ENCODE measurements at regions of chr17 and their contacts with region 1.

Region 1: DNA sequence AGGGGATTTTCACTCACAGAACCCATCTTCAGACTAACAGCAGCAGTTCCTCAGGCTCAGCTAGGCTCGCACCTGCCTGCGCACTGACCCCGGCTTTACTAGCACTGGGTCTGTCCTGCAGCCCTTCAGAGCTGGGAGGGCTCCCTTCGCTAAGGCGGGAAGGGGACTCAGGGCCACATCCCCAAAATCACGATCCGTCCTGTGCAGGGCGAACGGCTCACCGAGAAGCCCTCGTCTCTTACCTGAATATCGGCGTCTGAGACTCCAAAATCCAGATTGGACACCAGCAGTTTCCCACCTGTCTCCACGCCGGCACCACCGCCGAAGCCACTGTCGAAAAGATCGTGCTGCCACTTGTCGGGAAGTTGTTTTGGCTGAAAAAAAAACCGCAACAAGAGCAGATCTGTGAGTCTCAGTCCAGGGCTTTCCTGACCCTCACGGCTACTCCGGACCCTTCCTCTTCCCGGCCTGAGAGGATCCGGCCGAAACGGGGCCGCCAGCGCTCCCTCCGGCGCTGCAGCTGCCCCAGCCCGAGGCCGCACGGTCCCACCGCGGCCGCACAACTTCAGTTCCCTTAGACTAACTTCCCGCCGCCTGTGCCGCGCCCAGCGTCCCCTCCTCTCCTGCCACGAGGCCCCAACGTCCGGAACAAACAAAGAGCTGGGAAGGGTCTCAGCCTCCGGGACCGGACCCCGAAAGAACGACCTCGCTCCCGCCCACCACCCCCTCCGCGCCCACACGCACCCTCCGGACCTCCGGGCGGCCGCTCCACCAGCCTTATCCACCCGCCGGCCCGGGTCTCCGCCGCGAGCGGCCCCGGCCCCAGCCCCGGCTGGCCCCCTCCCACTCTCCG is 713 bp downstream of the ALYREF start:
- DNase-seq: no peak
- ATAC-seq: no peak
- H3K4me3 ChIP-seq: peak overlapping the region; percentile 91
- H3K27ac ChIP-seq: peak overlapping the region; percentile 74
- H3K4me1 ChIP-seq: peaks cover 30% of the 10 kb centered on the region
- H3K27me3 ChIP-seq: no peaks in the 10 kb centered on the region
- CTCF ChIP-seq: no peak
- EP300 ChIP-seq: no peak
- POLR2A ChIP-seq: no peak
- RAD21 ChIP-seq: no peak

Region 2: DNA sequence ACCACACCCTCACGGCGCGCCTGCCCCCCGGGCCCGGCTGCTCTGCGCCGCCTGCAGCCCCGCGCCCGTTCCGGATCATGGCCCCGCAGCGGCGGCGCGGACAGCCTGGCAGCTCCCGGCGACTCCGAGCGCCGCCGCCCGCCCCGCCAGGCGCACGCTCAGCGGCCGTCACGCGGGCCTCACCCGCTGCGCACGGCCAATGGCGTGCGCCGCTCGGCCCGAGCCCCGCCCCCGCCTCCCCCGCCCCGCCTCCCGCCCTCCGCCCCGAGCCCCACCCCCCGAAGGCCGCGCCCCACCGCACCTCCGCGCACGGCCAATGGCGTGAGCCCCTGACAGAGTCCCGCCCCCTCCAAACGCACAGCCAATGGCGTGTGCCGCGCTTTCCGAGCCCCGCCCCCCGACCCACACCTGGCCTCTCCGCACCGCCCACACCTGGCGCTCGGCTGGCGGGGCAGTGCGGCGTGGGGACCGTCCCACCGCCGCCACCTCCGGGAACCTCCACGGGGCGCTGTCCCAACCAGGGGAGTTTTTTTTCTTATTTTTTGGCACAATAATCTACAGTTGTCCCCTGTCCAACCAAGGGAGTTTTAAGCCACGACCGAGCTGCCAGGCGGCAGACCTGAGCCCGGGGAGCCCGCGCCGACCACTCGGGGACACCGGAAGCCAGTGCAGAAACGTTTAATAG is 20.7 kb after region 1 on chr17 and contains the start of gene PCYT2:
- CTCF ChIA-PET with region 1: interaction called, 3 read pairs
- POLR2A ChIA-PET with region 1: interaction called, 13 read pairs
- RAD21 ChIA-PET with region 1: interaction called, 3 read pairs
- SMC1A ChIA-PET with region 1: no interaction called
- in situ Hi-C with region 1: no loop called
- intact Hi-C with region 1: no loop called
- DNase-seq: peak; percentile 45
- ATAC-seq: peak; percentile 98
- H3K4me3 ChIP-seq: peak within 1 kb of the TSS; percentile 95
- H3K27ac ChIP-seq: peak within 1 kb of the TSS; percentile 4; the same call in 1 of the 2 replicates
- H3K4me1 ChIP-seq: peaks cover 5% of the 10 kb centered on the region; the same call in 1 of the 2 replicates
- H3K27me3 ChIP-seq: no peaks in the 10 kb centered on the region
- CTCF ChIP-seq: no peak
- EP300 ChIP-seq: no peak
- POLR2A ChIP-seq: peak; percentile 67
- RAD21 ChIP-seq: no peak
- polyA plus RNA-seq, gene PCYT2: 0.63 to 1.2 TPM

Region 3: DNA sequence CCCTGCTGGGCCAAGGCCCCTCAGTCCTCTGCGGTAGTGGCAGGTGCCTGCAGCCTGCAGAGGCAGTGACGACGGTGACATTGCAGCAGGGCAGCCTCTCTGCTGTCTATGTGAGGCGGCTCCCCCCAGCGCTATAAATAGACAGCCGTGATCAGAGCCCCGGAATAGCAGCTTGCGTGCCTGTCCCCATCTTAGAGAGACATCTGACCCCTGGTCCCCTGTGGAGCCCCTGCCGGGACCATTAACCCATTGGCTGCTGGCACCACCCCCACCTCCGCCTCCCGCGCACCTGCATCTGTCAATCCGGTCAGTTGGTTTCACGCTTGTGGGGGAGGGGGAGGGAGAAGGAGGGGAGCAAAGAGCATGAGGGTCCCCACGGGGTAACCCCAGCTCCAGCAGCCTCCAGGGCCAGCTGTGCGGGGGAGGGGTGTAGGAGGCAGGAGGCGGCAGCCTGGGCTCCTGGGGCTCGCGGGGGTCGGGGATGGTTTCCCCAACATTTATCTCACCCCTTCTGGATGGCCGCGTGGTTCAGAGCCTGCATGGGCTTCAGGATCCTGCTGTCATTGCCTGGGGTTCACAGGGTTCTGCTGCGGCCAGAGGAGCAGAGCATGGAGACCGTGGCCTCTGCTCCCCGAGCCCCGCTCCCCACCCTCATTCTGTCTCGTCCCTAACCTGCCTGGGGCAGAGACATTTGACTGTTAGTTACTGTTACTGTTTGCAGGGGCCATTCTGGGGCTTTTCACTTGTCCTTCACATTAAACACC is 51.3 kb after region 1 on chr17:
- CTCF ChIA-PET with region 1: no interaction called
- POLR2A ChIA-PET with region 1: no interaction called
- RAD21 ChIA-PET with region 1: no interaction called
- SMC1A ChIA-PET with region 1: no interaction called
- in situ Hi-C with region 1: no loop called
- intact Hi-C with region 1: no loop called
- DNase-seq: no peak
- ATAC-seq: no peak
- H3K4me3 ChIP-seq: no peak overlapping the region
- H3K27ac ChIP-seq: no peak overlapping the region
- H3K4me1 ChIP-seq: no peaks in the 10 kb centered on the region
- H3K27me3 ChIP-seq: no peaks in the 10 kb centered on the region
- CTCF ChIP-seq: no peak
- EP300 ChIP-seq: no peak
- POLR2A ChIP-seq: no peak
- RAD21 ChIP-seq: no peak